HepG2 (cell line): ENCODE measurements at regions of chr5 and their contacts with region 1.

Region 1: DNA sequence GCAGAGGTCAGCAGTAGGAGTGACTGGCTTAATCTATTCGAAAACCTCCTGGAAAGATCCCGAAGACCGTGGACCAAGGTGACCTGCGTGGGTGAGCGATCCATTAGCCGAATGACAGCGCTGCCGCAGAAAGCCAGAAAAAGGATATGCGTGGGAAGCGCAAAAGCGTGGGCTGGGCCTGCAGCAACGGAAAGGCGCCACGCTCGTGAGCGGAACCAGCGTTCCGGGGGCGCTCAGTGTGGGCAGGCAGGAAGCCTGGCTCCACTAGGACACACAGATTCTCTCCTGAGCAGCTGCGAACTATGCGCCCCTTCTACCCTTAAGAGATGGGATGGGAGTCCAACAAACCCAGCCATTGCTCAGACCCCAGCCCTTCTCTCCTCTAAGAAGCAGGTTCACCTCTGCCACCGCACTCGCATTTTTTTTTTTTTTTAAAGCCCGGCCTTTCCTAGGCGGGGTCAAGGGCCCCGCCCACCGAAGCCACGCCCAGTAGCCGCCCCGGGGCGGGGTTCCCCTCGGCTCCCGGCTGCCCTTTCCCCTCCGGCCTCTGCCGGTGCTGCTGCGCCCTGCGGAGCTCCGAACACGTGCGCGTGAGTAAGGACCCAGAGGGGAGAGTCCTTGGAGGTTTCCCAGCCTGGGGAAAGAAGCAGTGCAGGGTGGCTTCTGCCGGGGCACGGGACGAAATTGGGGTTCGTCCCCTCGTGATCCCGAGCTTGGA is 19.8 kb upstream of the MATR3 start:
- DNase-seq: peak; percentile 82
- ATAC-seq: peak; percentile 86
- H3K4me3 ChIP-seq: peak overlapping the region; percentile 65 to 96 (median 79)
- H3K27ac ChIP-seq: peak overlapping the region; percentile 77
- H3K4me1 ChIP-seq: peaks cover 76% of the 10 kb centered on the region
- H3K27me3 ChIP-seq: no peaks in the 10 kb centered on the region; a peak in 1 of 5 replicates
- CTCF ChIP-seq: no peak; the same call in 1 of the 2 replicates
- EP300 ChIP-seq: 0 out of 4 replicates have a peak, but pooled peaks of 1 of the 2 experiments have one; percentile 4
- POLR2A ChIP-seq: peak; percentile 89 to 96
- RAD21 ChIP-seq: no peak

Region 2: DNA sequence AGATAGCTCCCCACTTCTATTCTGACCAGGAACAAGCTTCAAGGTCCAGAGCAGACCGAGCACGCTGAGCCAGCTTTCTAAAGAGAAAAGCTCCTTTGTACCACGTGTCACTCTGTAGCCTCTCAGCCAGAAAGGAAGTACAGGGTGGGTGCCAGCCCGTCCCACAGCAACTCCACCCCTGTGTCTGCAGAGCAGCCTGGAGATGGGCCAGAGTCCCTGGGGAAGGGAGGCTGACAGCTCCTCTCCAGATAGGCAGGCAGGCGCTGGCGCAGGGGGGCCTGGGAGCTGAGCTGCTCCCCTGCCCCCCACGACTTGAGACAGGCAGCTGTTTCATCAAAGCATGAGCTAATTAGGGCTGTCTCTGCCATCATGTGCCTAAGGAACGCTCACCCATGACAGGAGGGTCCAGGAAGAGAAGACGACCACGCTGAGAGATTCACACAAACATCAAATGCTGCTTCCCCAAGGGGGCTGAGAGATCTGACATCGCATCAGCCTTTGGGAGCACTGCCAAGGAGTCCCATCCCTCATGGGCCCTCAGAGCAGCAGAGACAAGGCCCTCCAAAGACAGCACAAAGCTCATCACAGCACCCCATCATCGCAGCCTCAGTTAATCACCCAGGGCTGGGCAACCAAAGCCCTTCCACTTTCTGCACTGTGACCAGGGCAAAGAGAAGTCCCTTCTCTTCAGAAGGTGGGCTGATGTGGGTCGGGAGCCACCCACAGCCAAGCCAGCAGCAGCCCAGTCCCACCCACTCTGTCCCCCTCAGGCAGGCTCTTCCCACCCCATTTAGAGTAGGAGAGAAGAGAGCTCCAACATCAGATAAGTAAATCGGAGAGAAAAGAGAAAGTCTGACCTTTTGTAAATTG is 320.1 kb before region 1 on chr5:
- CTCF ChIA-PET with region 1: no interaction called
- POLR2A ChIA-PET with region 1: no interaction called
- in situ Hi-C with region 1: loop called (anchors 25 kb)
- intact Hi-C with region 1: no loop called
- DNase-seq: no peak
- ATAC-seq: peak; percentile 28
- H3K4me3 ChIP-seq: no peak overlapping the region
- H3K27ac ChIP-seq: no peak overlapping the region
- H3K4me1 ChIP-seq: peaks cover 32% of the 10 kb centered on the region
- H3K27me3 ChIP-seq: no peaks in the 10 kb centered on the region
- CTCF ChIP-seq: no peak
- EP300 ChIP-seq: no peak
- POLR2A ChIP-seq: no peak
- RAD21 ChIP-seq: no peak

Region 3: DNA sequence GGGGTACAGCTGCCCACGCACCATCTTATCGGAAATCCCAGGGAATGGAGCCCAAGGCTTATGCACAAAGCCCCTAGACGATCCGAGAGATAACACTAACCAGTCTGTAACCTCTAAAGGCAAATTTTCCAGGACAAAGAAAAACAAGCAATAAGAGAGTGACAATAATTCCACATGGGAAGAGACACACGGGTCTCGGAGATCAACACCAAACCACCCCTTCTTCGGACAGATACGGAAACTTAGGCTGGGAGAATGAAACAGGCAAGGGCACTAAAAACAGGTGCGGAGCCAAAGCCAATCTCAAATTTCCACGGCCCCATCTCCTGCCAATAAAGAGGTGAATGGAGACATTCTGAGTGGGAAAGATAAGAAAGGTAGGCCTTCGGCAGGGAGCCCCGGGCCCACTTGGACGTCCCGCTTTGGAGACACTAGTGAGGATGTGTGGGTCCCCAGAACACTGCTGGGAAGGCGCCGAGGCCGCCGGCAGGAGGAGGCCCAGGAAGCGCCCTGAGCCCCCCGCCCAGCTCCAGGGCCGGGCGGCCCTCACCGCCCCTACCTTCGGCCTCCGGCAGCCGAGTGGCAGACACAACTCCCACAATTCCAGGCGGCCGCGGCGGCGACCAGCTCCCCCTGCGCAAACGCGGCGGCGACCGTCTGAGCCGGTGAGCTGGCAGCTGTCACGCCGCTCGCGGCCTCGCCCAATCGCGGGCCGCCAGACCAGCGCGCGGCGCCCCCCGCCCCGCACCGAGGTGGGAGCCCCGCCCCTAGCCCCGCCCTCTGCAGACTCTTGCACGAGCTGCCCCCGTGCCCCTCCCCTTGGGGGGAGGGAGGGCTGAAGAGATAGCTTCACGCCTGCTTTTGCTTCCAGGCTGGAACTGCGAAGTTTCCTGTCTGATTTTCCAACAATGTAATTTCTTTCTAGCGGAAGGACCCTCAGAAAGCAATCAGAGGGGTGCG is 75.7 kb before region 1 on chr5 and contains the start of gene SIL1:
- CTCF ChIA-PET with region 1: no interaction called
- POLR2A ChIA-PET with region 1: interaction called, 15 read pairs
- in situ Hi-C with region 1: no loop called
- intact Hi-C with region 1: no loop called
- DNase-seq: peak; percentile 88
- ATAC-seq: peak; percentile 98
- H3K4me3 ChIP-seq: peak within 1 kb of the TSS; percentile 72 to 86 (median 78)
- H3K27ac ChIP-seq: peak within 1 kb of the TSS; percentile 89
- H3K4me1 ChIP-seq: peaks cover 37% of the 10 kb centered on the region
- H3K27me3 ChIP-seq: peaks cover 0 to 5% of the 10 kb centered on the region in 2 experiments; a peak in 1 of 5 replicates
- CTCF ChIP-seq: no peak
- EP300 ChIP-seq: no peak; a peak in 1 of 4 replicates
- POLR2A ChIP-seq: peak; percentile 87 to 96
- RAD21 ChIP-seq: peak; percentile 57
- total RNA-seq, gene SIL1: 15.9 and 30.0 TPM in 2 replicates

Region 4: GRCh38 chr5:139293504-139294373 is 20.0 kb after region 1 on chr5 and contains the start of gene MATR3:
- CTCF ChIA-PET with region 1: no interaction called
- POLR2A ChIA-PET with region 1: interaction called, 51 read pairs
- in situ Hi-C with region 1: no loop called
- intact Hi-C with region 1: no loop called
- DNase-seq: peak; percentile 89
- ATAC-seq: peak; percentile 86
- H3K4me3 ChIP-seq: peak within 1 kb of the TSS; percentile 92 to 99 (median 97)
- H3K27ac ChIP-seq: peak within 1 kb of the TSS; percentile 97
- H3K4me1 ChIP-seq: peaks cover 33% of the 10 kb centered on the region
- H3K27me3 ChIP-seq: no peaks in the 10 kb centered on the region; a peak in 1 of 5 replicates
- CTCF ChIP-seq: no peak
- EP300 ChIP-seq: 0 out of 4 replicates have a peak, but pooled peaks of 1 of the 2 experiments have one; percentile 25
- POLR2A ChIP-seq: peak; percentile 90 to 98
- RAD21 ChIP-seq: peak; percentile 17; the same call in 1 of the 2 replicates
- total RNA-seq, gene MATR3: 341 and 484 TPM in 2 replicates

Region 5: DNA sequence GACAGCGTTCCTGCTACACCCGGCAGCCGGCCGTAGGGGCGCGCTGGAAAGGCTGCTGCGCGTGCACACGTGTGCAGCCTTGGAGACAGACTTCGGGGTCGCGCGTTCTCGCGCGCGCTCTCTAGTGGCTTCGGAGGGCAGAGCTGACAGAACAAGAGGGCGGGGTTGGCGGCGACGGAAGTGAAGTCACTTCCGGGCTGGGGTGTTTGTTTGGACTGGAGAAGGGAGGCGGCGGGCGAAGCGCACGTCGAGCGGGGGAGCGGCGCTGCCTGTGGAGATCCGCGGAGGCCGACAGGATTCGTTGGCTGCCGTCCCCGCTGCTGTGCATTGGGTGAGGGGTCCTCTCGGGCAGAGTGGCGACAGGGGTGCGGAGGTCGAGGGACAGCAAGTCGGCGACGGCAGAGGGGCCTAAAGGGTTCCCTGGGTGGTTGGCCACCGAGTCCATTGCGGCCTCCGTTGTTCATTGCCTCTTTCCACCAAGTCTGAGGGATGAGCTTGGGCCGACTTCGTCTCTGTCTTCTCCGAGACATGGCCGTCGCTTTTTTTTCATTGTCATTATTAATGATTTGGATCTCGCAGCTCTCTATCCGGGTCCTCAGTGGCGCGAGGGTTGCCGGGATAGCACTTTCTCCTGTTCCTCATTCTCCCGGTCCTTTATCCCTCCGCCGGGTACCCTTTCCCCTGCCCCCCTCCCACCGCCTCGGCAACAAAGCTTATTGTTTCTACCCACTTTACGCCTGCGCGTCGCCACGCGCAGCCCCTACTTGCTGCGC is 68.1 kb after region 1 on chr5 and contains the start of gene PAIP2:
- CTCF ChIA-PET with region 1: no interaction called
- POLR2A ChIA-PET with region 1: interaction called, 17 read pairs
- in situ Hi-C with region 1: no loop called
- intact Hi-C with region 1: no loop called
- DNase-seq: peak; percentile 94
- ATAC-seq: peak; percentile 85
- H3K4me3 ChIP-seq: peak within 1 kb of the TSS; percentile 74 to 98 (median 84)
- H3K27ac ChIP-seq: peak within 1 kb of the TSS; percentile 99
- H3K4me1 ChIP-seq: peaks cover 43% of the 10 kb centered on the region
- H3K27me3 ChIP-seq: no peaks in the 10 kb centered on the region; a peak in 1 of 5 replicates
- CTCF ChIP-seq: peak; percentile 96
- EP300 ChIP-seq: peak; percentile 39 to 49; a peak in 2 of 4 replicates
- POLR2A ChIP-seq: peak; percentile 83 to 95
- RAD21 ChIP-seq: peak; percentile 65
- total RNA-seq, gene PAIP2: 61.5 and 104 TPM in 2 replicates